ENCODE measurements at regions of chr1 and their contacts with region 1.

Region 1: DNA sequence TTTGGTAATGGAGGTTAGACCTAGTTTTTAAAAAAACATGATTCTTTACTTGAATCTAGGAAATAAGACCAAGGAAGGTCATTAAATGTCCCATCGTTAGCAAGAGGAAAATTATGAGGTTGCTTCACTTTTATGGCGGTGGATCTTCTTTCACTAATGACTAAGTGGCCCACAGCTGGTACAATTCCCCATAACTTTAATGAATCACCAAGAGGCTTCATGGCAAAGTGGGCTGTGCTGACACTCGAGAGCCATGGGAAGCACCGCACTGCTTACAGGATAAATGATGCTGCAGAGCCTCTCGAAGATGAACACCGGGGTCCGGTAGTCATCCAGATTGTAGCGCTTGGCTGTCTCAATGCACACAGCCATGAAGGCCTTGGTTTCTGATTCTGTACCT is 108.8 kb downstream of the UBR4 start:
- DNase-seq: no peak
- H3K4me3 ChIP-seq: no peak overlapping the region
- CTCF ChIP-seq: no peak
- POLR2A ChIP-seq: no peak

Region 2: GRCh38 chr1:18608534-18608933 is 492.7 kb before region 1 on chr1:
- intact Hi-C with region 1: loop called (anchors 10 kb)
- DNase-seq: no peak
- H3K4me3 ChIP-seq: no peak overlapping the region
- CTCF ChIP-seq: no peak
- POLR2A ChIP-seq: no peak

Region 3: DNA sequence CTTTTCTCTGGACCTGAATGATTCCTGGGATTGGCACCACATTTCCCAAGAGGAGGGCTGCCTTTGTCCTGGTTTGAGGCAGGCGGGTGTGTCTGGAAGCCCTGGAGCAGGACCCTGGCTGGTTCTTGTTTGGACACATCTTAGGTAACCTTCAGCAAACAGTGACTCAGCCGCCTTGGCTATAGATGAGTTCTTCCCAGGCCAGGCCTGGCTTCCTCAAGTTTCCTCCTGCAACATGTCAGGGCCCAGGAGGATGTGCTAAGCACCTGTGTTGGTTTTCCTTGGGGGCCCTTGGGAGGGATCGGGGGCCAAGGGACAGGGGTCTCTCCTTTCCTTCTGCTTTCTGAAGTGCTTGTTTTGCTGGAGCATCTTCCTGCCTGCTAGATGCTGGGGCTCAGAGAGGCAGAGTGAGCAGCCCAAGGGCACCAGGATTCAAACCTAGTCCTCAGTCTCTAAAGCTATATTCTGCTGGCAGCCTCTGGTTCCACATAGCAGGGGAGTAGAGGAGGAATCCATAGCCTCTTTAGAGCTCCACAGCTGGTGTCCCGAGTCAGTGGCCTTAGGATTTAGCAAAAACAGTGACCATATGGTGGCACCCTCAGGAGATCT is 432.3 kb before region 1 on chr1:
- intact Hi-C with region 1: no loop called
- DNase-seq: peak in 1 of 2 donors; percentile 55
- H3K4me3 ChIP-seq: no peak overlapping the region
- CTCF ChIP-seq: no peak
- POLR2A ChIP-seq: no peak

Measured in lower leg skin (tissue), 4 donors.